ENCODE measurements at regions of chr11 and their contacts with region 1.

Region 1: GRCh38 chr11:58898106-58898505 is 41.2 kb upstream of the GLYATL1 start:
- DNase-seq: no peak
- H3K4me3 ChIP-seq: no peak overlapping the region
- H3K27ac ChIP-seq: no peak overlapping the region
- H3K4me1 ChIP-seq: no peaks in the 10 kb centered on the region
- H3K27me3 ChIP-seq: no peaks in the 10 kb centered on the region
- CTCF ChIP-seq: no peak

Region 2: GRCh38 chr11:58391879-58392278 is 506.2 kb before region 1 on chr11:
- intact Hi-C with region 1: no loop called
- DNase-seq: no peak
- H3K4me3 ChIP-seq: no peak overlapping the region
- H3K27ac ChIP-seq: no peak overlapping the region
- H3K4me1 ChIP-seq: no peaks in the 10 kb centered on the region
- H3K27me3 ChIP-seq: no peaks in the 10 kb centered on the region
- CTCF ChIP-seq: no peak

Region 3: DNA sequence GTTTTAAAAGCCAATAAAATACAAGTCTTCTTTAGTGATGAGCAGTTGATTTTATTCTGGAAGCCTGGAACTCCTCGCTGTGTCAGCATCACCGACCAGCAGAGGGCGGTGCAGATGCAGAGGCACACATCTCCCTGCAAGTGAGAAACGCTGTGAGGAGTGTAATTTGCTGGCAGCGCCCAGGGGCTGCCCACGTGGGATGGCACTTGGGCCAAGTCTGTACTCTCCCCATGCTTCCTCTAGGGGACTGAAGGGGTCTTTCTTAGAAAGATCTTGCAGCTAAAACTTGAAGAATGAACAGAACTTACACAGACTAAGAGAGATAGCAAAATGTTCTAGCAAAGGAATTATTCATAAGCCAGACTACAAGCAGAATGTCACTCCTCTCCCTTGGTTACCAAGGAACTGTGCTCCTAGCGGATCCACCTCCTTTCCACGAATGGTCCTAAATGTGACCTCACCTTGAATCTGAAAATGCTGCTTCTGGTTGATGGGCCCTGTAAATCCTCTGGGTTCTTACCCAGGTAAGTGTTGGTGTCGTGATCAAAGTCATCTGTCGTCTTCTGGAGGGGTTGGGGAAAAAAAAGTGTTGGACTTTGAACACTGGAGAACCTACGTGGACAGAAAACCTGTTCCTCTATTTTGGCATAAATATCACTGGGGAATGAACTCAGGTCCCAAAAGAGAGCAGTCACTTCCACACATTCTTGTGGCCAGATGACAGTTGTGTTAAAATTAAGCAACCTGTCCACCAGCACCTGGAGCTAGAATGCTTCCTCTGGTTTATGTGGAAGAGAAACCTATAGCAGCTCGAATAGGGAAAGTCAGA is 243.8 kb before region 1 on chr11:
- intact Hi-C with region 1: loop called (anchors 10 kb)
- DNase-seq: peak; percentile 80
- H3K4me3 ChIP-seq: no peak overlapping the region
- H3K27ac ChIP-seq: no peak overlapping the region
- H3K4me1 ChIP-seq: no peaks in the 10 kb centered on the region
- H3K27me3 ChIP-seq: no peaks in the 10 kb centered on the region
- CTCF ChIP-seq: peak; percentile 79

Region 4: GRCh38 chr11:58762284-58763119 is 135.6 kb before region 1 on chr11:
- intact Hi-C with region 1: no loop called
- DNase-seq: no peak
- H3K4me3 ChIP-seq: no peak overlapping the region
- H3K27ac ChIP-seq: no peak overlapping the region
- H3K4me1 ChIP-seq: no peaks in the 10 kb centered on the region
- H3K27me3 ChIP-seq: no peaks in the 10 kb centered on the region
- CTCF ChIP-seq: no peak

Region 5: GRCh38 chr11:58805065-58805464 is 93.0 kb before region 1 on chr11:
- intact Hi-C with region 1: no loop called
- DNase-seq: no peak
- H3K4me3 ChIP-seq: no peak overlapping the region
- H3K27ac ChIP-seq: no peak overlapping the region
- H3K4me1 ChIP-seq: no peaks in the 10 kb centered on the region
- H3K27me3 ChIP-seq: no peaks in the 10 kb centered on the region
- CTCF ChIP-seq: no peak

Measured in colonic mucosa (tissue), 4 donors.